ENCODE measurements at regions of chr9 and their contacts with region 1.

Region 1: DNA sequence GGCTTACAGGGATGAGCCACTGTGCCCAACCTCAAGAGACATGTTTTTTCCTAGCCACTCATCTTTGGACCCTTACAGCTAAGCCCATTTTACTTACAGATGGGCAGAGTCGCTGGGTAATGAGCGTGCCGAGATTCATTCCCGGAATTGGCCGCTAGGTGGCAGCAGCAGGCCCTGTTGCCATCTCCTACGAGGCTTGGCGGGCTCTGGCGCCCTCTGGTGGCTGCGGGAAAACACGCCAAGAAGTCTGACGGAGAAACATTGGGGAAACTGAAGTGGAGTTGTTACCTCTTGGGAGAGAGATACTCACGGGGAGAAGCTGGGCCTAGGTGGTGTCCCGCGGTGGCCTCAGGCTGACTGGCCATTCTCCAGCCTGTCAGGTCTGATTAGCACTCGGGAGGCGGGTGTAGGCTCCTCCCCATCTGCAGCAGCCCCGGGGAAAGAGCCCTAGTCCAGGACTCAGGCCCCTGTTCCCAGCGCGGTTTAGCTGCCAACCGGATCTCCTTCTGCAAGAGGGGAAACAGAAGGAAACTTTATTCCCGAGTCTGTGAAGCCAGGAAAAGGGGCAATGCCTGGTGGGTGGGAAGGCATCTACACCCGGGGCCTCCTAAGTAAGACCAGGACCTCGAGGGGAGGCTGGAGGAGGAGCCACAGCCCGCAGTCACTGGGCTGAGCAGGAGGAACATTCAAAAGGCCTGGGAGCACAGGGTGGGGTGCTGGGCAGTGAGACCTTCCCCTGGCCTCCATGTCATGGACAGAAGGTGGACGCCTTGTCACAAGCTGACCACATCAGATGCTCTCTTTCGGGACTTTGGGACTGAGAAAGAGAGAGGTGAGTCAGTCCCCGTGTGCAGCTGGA is 9.7 kb downstream of the PTGES2 start:
- DNase-seq: peak; percentile 98
- ATAC-seq: peak; percentile 91
- H3K4me3 Mint-ChIP-seq: no peak overlapping the region
- H3K27ac Mint-ChIP-seq: no peak overlapping the region
- H3K4me1 Mint-ChIP-seq: peaks cover 10% of the 10 kb centered on the region
- H3K27me3 Mint-ChIP-seq: no peaks in the 10 kb centered on the region
- CTCF ChIP-seq: peak; percentile 100

Region 2: DNA sequence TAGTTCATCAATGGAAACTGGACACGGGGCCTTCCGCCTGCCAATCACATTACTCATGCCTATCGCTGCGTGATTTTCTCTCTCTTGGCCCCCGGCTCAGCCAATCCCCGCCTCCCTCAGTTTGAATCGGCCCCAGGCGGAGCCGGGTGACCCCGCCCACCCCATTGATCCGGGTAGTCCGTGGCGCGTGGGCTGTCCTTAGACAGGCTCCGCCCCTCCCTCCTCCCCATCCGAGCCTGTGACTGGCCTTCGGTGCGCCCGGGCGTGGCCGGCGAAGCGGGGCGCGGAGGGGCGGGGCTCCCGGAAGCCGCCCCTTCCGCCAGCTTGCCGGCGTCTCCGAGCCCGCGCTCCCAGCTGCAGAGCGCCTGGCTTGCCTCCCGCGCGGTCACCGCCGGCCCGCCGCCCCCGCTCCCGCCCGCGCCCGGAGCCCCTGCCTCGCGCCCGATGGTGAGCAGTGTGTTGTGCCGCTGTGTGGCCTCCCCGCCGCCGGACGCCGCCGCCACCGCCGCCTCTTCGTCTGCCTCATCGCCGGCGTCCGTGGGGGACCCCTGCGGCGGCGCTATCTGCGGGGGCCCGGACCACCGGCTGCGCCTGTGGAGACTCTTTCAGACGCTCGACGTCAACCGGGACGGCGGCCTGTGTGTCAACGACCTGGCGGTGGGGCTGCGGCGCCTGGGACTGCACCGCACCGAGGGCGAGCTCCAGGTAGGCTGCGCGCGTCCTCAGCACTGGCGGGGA is 49.8 kb before region 1 on chr9 and contains the start of gene SLC25A25:
- CTCF ChIA-PET with region 1: interaction called, 12 read pairs
- POLR2A ChIA-PET with region 1: no interaction called
- intact Hi-C with region 1: no loop called
- DNase-seq: peak; percentile 100
- ATAC-seq: peak; percentile 89
- H3K4me3 Mint-ChIP-seq: peak within 1 kb of the TSS; percentile 96
- H3K27ac Mint-ChIP-seq: peak within 1 kb of the TSS; percentile 87
- H3K4me1 Mint-ChIP-seq: peaks cover 50% of the 10 kb centered on the region
- H3K27me3 Mint-ChIP-seq: no peaks in the 10 kb centered on the region
- CTCF ChIP-seq: no peak
- total RNA-seq, gene SLC25A25: 12.9 to 14.6 TPM

Region 3: GRCh38 chr9:128094166-128094967 is 23.5 kb before region 1 on chr9:
- CTCF ChIA-PET with region 1: interaction called, 94 read pairs
- POLR2A ChIA-PET with region 1: interaction called, 3 read pairs
- intact Hi-C with region 1: no loop called
- DNase-seq: peak; percentile 92
- ATAC-seq: peak; percentile 87
- H3K4me3 Mint-ChIP-seq: peak overlapping the region; percentile 55
- H3K27ac Mint-ChIP-seq: peak overlapping the region; percentile 94
- H3K4me1 Mint-ChIP-seq: peaks cover 81% of the 10 kb centered on the region
- H3K27me3 Mint-ChIP-seq: no peaks in the 10 kb centered on the region
- CTCF ChIP-seq: no peak

Region 4: GRCh38 chr9:128127990-128128835 is 10.4 kb after region 1 on chr9:
- CTCF ChIA-PET with region 1: interaction called, 40 read pairs
- POLR2A ChIA-PET with region 1: no interaction called
- intact Hi-C with region 1: no loop called
- DNase-seq: peak; percentile 89
- ATAC-seq: peak; percentile 85
- H3K4me3 Mint-ChIP-seq: peak overlapping the region; percentile 92
- H3K27ac Mint-ChIP-seq: peak overlapping the region; percentile 94
- H3K4me1 Mint-ChIP-seq: peaks cover 29% of the 10 kb centered on the region
- H3K27me3 Mint-ChIP-seq: no peaks in the 10 kb centered on the region
- CTCF ChIP-seq: no peak

Region 5: DNA sequence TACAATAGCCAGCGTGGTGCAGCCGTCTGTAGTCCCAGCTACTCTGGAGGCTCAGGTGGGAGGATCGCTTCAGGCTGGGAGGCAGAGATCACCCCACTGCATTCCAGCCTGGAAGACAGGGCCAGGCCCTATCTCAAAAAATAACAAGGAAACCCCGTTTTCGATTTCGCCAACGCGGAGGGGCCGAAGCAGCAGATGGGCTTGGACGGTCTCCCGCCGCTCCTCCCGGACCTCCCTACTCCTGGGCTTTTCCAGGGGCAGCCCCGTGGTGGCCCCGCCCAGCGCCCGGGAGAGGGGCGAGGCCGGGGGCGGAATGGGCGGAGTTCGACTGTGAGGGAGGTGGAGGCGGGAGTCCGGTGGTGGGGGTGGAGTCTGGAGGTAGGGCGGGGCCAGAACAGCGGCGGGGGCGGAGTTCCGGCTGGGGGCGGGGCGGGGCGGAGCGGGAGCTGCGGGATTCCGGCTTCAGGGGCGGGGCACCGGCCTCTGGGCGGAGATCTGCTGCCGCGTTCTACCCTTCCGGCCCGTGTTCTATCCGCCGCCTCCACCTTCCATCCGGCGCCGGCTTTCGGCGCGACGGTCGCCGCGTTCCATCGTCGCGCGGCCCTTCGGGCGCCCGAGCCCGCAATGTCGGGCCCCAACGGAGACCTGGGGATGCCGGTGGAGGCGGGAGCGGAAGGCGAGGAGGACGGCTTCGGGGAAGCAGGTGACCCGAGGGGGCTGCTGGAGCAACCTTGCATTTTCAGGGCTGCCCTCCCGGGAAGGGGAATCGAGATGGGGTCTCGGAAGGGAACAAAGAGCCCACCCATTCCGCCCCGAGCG is 42.2 kb after region 1 on chr9 and contains the start of gene BBLN:
- CTCF ChIA-PET with region 1: interaction called, 10 read pairs
- POLR2A ChIA-PET with region 1: interaction called, 3 read pairs
- intact Hi-C with region 1: no loop called
- DNase-seq: peak; percentile 97
- ATAC-seq: peak; percentile 89
- H3K4me3 Mint-ChIP-seq: peak within 1 kb of the TSS; percentile 81
- H3K27ac Mint-ChIP-seq: peak within 1 kb of the TSS; percentile 87
- H3K4me1 Mint-ChIP-seq: peaks cover 24% of the 10 kb centered on the region
- H3K27me3 Mint-ChIP-seq: no peaks in the 10 kb centered on the region
- CTCF ChIP-seq: no peak
- total RNA-seq, gene BBLN: 127 to 132 TPM